Psoas muscle (tissue), 8 donors: ENCODE measurements at regions of chrX and their contacts with region 1.

Region 1: GRCh38 chrX:133538148-133538547 is 122.9 kb upstream of the GPC4 start:
- DNase-seq: no peak
- ATAC-seq: peak; percentile 63 to 87 (median 80)
- H3K4me3 ChIP-seq: no peak overlapping the region
- H3K27ac ChIP-seq: peak overlapping the region; percentile 53
- H3K4me1 ChIP-seq: peaks cover 14% of the 10 kb centered on the region
- H3K27me3 ChIP-seq: peaks cover 0 to 4% (median 0%) of the 10 kb centered on the region in 3 donors
- CTCF ChIP-seq: no peak

Region 2: GRCh38 chrX:133645977-133646718 is 108.0 kb after region 1 on chrX:
- intact Hi-C with region 1: loop called in 1 of 2 experiments (anchors 5 kb)
- DNase-seq: no peak
- ATAC-seq: peak; percentile 20 to 67 (median 52)
- H3K4me3 ChIP-seq: no peak overlapping the region
- H3K27ac ChIP-seq: peak overlapping the region; percentile 19
- H3K4me1 ChIP-seq: no peaks in the 10 kb centered on the region
- H3K27me3 ChIP-seq: no peaks in the 10 kb centered on the region
- CTCF ChIP-seq: no peak